Activated T-helper 1 cell treated with anti-CD3 and anti-CD28 coated beads, Interleukin-12 subunit alpha, Interleukin-12 subunit beta, Interleukin-2, Interleukin-4 antibody, amounts not matched to agents 30 ng/mL and 10 ng/mL and 1 ng/mL, durations not matched to agents 14 hours and 24 hours and 36 hours (primary cell): ENCODE measurements at regions of chr12 and their contacts with region 1.

Region 1: DNA sequence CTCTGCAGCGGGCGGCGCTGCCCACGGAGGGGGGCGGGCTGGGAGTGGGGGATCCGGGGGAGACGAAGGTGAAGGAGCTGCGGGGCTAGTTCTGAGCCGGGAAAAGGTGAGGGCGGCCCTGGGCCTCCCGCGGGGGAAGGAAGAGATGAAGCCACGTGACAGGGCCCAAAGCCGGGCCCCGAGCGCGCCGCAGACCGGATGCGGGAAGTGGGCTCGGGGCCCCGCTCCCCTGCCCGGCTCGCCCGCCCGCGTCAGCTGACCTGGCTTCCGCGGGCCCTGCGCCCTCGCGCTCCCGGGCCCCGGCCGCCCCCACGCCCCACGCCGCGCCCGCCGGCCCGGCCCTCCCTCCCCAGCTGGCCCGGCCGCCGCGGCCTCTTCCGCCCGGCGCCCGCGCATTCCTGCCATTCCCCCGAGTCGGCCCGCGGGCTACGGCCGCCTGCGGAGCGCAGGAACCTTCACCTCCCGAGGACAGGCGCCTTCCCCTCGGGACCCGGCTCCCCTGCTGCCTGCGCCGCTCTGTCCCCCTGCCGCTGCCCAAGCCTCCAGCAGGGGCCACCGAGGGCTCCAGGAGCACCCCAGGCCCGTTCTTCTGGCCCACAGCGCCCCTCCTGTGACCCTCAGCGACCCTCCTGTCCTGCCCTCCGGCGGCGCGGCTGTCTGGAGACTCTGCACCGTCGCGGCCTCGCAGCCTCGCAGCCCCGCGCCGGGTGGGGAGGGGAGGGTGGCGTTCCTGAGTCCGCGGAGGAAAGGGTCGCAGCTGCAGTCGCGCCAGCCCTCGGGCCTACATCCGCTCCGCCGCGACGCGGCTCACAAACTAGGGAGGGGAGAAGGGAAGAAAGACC is 20.4 kb downstream of the NINJ2 start:
- DNase-seq: peak; percentile 78
- H3K4me3 Mint-ChIP-seq: peak overlapping the region; percentile 84
- H3K27ac Mint-ChIP-seq: peak overlapping the region; percentile 95
- H3K4me1 Mint-ChIP-seq: peaks cover 63% of the 10 kb centered on the region
- H3K27me3 Mint-ChIP-seq: no peaks in the 10 kb centered on the region

Region 2: GRCh38 chr12:614411-614970 is 28.4 kb before region 1 on chr12:
- intact Hi-C with region 1: loop called (anchors 1 kb)
- DNase-seq: no peak
- H3K4me3 Mint-ChIP-seq: no peak overlapping the region
- H3K27ac Mint-ChIP-seq: no peak overlapping the region
- H3K4me1 Mint-ChIP-seq: peaks cover 62% of the 10 kb centered on the region
- H3K27me3 Mint-ChIP-seq: no peaks in the 10 kb centered on the region

Region 3: DNA sequence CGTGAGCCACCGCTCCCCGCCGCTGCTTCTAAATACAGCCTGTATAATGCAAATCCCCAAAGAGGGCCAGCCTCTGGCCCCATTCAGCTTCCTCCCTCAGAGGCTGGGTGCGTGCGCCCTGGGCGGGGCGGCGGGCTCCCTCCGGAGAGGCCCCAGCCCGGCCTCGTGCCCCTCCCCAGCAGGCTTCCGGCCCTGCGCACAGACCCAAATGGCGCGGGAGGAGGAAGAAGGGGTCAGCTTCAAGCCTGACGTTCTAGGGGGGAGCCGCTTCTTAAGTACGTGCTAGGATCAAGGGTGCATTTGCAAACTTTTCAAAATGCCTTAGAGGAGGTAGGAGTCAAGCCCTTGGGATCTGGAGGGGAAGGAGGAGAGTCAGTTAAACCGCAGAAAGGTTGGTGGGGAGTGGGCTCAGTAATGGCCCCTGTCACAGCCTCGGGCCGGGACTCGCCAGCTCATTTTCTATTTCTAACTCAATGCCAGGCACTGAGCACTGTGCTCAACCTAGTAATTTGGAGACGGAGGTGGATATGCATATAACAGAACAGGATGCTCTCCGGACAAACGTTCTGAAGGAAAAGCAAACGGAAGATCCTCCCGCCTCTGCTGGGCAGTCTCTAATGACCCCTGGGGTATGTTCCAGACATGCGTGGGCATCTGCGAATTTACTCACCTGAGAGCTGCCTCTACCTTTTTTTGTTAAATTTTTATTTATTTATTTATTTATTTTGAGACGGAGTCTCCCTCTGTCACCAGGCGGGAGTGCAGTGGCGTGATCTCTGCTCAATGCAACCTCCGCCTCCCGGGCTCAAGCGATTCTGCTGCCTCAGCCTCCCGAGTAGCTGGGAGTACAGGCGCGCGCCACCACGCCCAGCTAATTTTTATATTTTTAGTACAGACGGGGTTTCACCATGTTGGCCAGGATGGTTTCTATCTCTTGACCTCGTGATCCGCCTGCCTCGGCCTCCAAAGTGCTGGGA is 11.9 kb before region 1 on chr12:
- intact Hi-C with region 1: loop called (anchors 1 kb)
- DNase-seq: peak; percentile 84
- H3K4me3 Mint-ChIP-seq: peak overlapping the region; percentile 96
- H3K27ac Mint-ChIP-seq: peak overlapping the region; percentile 98
- H3K4me1 Mint-ChIP-seq: peaks cover 45% of the 10 kb centered on the region
- H3K27me3 Mint-ChIP-seq: no peaks in the 10 kb centered on the region

Region 4: DNA sequence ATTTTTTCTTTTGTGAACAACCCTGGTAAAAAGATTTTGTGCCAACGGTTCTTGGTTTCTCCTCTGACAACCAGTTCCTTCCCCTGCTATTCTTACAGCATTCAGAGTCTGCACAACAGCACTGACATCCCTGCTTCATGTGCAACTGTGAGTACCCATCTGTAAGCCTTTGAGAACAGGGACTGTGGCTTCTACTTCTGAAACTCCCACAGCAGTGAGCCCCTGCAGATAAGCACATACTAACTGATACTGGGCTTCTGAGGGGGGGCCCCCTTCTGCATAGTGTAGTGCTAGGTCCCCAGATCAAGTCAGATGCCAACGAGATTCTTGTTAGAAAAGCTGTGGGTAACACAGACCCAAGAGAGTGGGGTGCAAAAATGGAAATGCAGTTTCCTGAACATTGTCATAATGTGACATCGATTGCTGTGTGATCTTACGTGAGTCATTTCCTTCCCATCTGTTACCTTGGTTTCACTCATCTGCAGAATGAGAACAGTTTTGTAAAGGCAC is 31.5 kb after region 1 on chr12:
- intact Hi-C with region 1: loop called (anchors 1 kb)
- DNase-seq: peak; percentile 73
- H3K4me3 Mint-ChIP-seq: peak overlapping the region; percentile 72
- H3K27ac Mint-ChIP-seq: peak overlapping the region; percentile 89
- H3K4me1 Mint-ChIP-seq: peaks cover 74% of the 10 kb centered on the region
- H3K27me3 Mint-ChIP-seq: no peaks in the 10 kb centered on the region

Region 5: GRCh38 chr12:795305-795704 is 152.5 kb after region 1 on chr12:
- intact Hi-C with region 1: loop called (anchors 1 kb)
- DNase-seq: no peak
- H3K4me3 Mint-ChIP-seq: peak overlapping the region; percentile 6
- H3K27ac Mint-ChIP-seq: peak overlapping the region; percentile 87
- H3K4me1 Mint-ChIP-seq: peaks cover 64% of the 10 kb centered on the region
- H3K27me3 Mint-ChIP-seq: no peaks in the 10 kb centered on the region